Gastrocnemius medialis (tissue), 4 donors: ENCODE measurements at regions of chrX and their contacts with region 1.

Region 1: DNA sequence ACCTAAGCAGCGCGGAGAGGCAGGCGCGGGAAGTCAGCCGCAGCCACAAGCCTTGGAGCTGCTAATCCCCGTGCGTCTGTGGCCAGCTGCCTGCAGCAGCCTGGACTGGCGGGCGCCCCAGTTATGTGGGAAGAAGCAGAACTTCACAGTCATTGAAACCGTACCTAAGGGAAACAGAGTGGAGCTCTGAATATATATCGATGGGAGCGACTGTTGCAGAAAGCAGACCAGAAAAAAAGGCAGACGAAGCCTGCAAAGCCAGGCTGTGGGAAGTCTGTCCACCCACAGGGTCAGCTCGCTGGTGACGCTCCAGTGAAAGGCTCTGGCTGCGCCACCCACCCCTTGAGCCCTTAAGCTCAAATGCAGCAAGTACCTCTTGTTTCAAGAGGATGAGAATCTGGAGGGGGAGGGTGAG is 24.7 kb downstream of the KCNE5 start:
- DNase-seq: peak; percentile 4 to 13
- ATAC-seq: no peak
- H3K4me3 ChIP-seq: no peak overlapping the region
- H3K27ac ChIP-seq: no peak overlapping the region
- H3K4me1 ChIP-seq: no peaks in the 10 kb centered on the region
- H3K27me3 ChIP-seq: peaks cover 0 to 13% (median 0%) of the 10 kb centered on the region in 3 donors
- CTCF ChIP-seq: no peak
- POLR2A ChIP-seq: no peak

Region 2: DNA sequence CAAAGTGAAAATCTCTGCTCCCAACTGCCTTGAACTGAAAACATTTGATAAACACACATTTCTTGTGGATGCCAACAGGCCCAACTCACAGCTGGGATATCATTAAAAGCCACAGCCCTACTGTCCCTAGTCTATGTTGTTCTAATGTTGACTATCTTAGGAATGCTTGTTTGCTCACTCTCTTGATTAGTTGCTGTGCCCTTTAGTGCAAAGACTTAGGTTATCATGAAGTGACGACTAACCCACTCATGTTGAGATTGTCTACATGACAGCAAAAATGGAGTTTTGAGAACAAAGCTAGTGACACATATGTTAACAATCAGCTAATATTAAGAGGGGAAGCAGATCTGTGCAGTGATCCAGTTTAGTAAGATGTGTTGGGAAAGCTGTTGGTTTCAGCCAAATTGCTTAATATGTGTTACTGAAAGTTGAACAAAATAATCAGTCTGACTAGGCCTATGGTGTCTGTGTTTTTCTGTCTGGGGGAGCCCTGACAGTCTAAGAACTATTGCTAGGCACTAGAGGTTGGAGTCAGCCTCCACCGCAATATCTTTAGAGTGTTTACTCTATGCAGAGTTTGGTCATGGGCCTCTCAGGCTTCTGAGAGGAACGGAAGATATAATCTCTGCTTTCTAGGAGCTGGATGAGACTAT is 1383.2 kb before region 1 on chrX:
- in situ Hi-C with region 1: no loop called
- intact Hi-C with region 1: loop called (anchors 10 kb)
- DNase-seq: no peak
- ATAC-seq: peak in 1 of 2 donors; percentile 33
- H3K4me3 ChIP-seq: no peak overlapping the region
- H3K27ac ChIP-seq: no peak overlapping the region
- H3K4me1 ChIP-seq: no peaks in the 10 kb centered on the region
- H3K27me3 ChIP-seq: no peaks in the 10 kb centered on the region
- CTCF ChIP-seq: no peak
- POLR2A ChIP-seq: no peak

Region 3: DNA sequence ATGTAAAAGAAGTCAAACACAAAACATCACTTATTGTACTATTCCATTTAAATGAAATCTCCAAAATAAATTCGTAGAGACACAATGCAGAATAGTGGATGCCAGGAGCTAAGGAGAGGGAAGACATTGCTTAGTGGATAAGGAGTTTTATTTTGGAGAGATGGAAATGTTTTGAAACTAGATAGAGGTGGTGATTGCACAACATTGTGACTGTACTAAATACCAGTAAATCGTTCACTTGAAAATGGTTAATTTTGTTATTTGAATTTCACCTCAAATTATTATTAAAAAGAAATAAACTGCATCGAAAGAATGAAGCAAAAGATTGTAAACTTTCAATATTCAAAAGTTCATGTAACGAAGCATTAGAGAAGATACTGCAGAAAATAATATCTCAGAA is 142.5 kb after region 1 on chrX:
- in situ Hi-C with region 1: no loop called
- intact Hi-C with region 1: no loop called
- DNase-seq: no peak
- ATAC-seq: no peak
- H3K4me3 ChIP-seq: no peak overlapping the region
- H3K27ac ChIP-seq: no peak overlapping the region
- H3K4me1 ChIP-seq: no peaks in the 10 kb centered on the region
- H3K27me3 ChIP-seq: no peaks in the 10 kb centered on the region
- CTCF ChIP-seq: no peak
- POLR2A ChIP-seq: no peak